ENCODE measurements at regions of chr9 and their contacts with region 1.

Region 1: GRCh38 chr9:112174218-112174964 is 706 bp downstream of the SUSD1 start:
- DNase-seq: peak; percentile 85 to 96 (median 95)
- H3K4me3 ChIP-seq: peak overlapping the region; percentile 44 to 81 (median 65)
- H3K27ac ChIP-seq: peak overlapping the region in 1 of 2 experiments; percentile 79
- H3K4me1 ChIP-seq: peaks cover 5 to 69% (median 57%) of the 10 kb centered on the region in 4 experiments
- H3K27me3 ChIP-seq: no peaks in the 10 kb centered on the region

Region 2: DNA sequence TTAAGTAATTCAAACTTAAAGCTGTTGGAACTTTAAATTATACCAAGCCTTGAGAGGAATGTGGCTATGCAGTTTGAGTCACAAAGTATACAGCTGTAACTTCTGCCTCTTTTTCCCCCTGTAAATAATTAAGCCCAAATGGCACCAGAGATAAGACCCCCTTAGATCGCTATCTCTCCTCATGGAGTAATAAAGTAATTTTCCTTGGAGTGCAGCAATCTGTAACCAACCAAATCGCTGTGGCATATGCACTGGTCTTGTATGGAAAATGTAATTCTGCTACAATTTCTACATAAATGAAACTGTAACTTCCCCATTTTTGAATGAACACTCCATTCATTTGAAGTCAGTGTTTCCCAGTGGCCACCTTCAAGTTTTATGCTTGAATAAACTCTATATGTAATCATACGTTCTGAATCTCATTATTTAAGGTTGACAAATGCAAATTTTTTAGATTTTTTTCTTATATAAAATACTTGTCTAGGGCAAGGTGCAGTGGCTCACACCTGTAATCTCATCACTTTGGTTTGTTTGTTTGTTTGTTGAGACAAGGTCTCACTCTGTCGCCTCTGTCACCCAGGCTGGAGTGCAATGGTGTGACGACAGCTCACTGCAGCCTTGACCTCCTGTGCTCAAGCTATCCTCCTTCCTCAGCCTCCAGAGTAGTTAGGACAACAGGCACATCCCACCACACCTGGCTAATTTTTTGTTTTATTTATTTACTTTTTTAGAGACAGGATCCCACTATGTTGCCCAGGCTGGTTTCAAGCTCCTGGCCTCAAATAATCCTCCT is 11.6 kb before region 1 on chr9:
- CTCF ChIA-PET with region 1: interaction called, 15 read pairs
- POLR2A ChIA-PET with region 1: interaction called, 4 read pairs
- DNase-seq: peak in 2 of 3 donors; percentile 65 to 70
- H3K4me3 ChIP-seq: peak overlapping the region in 2 of 7 experiments; percentile 12 to 71
- H3K27ac ChIP-seq: no peak overlapping the region
- H3K4me1 ChIP-seq: peaks cover 8 to 20% (median 15%) of the 10 kb centered on the region in 4 experiments
- H3K27me3 ChIP-seq: no peaks in the 10 kb centered on the region

Measured in common myeloid progenitor, CD34-positive (primary cell).